Ovary (tissue), 10 donors: ENCODE measurements at regions of chr14 and their contacts with region 1.

Region 1: DNA sequence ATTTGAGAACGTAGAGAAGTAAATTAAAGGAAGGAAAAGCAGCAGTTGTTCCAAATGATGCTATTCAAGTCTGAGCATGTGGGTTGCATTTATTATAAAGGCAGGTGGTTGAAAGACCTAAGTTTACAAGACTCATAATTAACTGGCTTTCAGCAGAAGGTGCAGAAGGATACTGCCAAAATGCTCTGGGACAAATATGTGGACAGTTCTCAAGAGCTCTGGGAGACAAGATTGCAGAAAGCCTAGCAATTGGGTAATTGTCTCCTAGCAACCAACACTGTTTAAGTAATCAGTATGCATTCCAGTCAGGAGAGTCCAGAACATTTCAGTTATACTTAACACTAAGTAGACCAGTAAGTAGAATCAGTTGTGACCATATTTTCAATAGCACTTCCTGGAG is 131.5 kb downstream of the GPR135 start:
- DNase-seq: no peak
- H3K4me3 ChIP-seq: no peak overlapping the region
- H3K27ac ChIP-seq: no peak overlapping the region
- H3K4me1 ChIP-seq: peaks cover 15% of the 10 kb centered on the region
- H3K27me3 ChIP-seq: no peaks in the 10 kb centered on the region
- CTCF ChIP-seq: no peak
- EP300 ChIP-seq: no peak
- POLR2A ChIP-seq: no peak

Region 2: DNA sequence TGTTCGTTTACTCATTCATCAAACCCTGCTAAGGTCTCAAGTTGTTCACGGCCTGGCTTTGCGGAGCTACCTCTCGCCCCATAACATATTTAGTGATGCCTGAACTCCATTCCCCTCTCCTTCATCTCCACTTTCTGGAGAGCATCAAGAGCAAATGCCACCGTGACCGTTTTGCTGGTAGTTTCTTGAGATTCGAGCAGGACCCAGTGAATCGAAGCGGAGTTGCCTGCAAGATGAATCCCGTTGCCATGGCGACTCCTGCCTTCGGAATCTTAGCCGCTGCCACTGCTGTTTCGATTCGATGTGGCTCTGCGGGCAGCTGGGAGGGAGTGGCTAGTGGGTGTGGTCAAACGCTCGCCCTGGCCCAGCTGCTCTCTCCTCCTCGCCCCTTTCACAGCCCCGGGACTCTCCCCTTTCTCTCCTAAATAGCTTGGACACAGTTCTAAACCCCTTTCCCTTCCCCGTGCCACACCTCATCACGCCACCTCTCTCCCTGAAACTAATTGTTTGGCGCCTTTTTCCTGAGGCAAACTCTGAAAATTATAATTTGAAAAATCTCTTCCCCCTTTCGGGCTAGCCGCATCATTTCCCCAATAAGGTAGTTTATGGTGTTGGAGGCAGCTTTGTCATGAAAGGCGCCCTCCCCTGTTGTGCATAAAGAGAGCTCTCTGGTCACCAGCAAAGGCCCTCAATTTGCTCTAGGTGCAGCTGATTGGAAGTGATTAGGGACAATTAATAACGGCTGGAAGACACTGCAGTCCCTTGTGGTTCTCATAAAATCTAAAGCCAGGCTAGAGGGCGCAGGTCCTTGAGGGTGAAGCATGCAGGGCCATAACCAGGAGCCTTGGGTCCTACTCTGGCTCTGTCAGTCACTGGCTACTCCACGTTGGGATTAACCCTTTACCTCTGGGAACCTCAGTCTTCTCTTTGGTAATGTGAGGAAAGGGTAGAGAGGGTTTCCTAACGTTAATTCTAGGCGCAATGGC is 143.6 kb before region 1 on chr14:
- intact Hi-C with region 1: loop called in 1 of 4 experiments (anchors 10 kb)
- DNase-seq: peak; percentile 72 to 85 (median 81)
- H3K4me3 ChIP-seq: peak overlapping the region; percentile 69
- H3K27ac ChIP-seq: peak overlapping the region; percentile 60 to 95
- H3K4me1 ChIP-seq: peaks cover 11% of the 10 kb centered on the region
- H3K27me3 ChIP-seq: no peaks in the 10 kb centered on the region
- CTCF ChIP-seq: no peak
- EP300 ChIP-seq: no peak
- POLR2A ChIP-seq: peak; percentile 11